CD8-positive, alpha-beta memory T cell (primary cell): ENCODE measurements at regions of chr5 and their contacts with region 1.

Region 1: GRCh38 chr5:135565725-135566421 is 12.9 kb downstream of the CXCL14 start:
- DNase-seq: peak; percentile 14 to 67 (median 42)
- H3K4me3 ChIP-seq: no peak overlapping the region
- H3K4me3 Mint-ChIP-seq: no peak overlapping the region
- H3K27ac ChIP-seq: no peak overlapping the region
- H3K27ac Mint-ChIP-seq: no peak overlapping the region
- H3K4me1 ChIP-seq: peaks cover 7% of the 10 kb centered on the region
- H3K4me1 Mint-ChIP-seq: peaks cover 3 to 14% (median 4%) of the 10 kb centered on the region in 3 donors
- H3K27me3 ChIP-seq: no peaks in the 10 kb centered on the region
- H3K27me3 Mint-ChIP-seq: peaks cover 4 to 17% of the 10 kb centered on the region in 2 donors

Region 2: GRCh38 chr5:135437796-135438560 is 127.9 kb before region 1 on chr5:
- CTCF ChIA-PET with region 1: no interaction called
- POLR2A ChIA-PET with region 1: no interaction called
- DNase-seq: no peak
- H3K4me3 ChIP-seq: no peak overlapping the region
- H3K4me3 Mint-ChIP-seq: no peak overlapping the region
- H3K27ac ChIP-seq: peak overlapping the region; percentile 51
- H3K27ac Mint-ChIP-seq: no peak overlapping the region
- H3K4me1 ChIP-seq: no peaks in the 10 kb centered on the region
- H3K4me1 Mint-ChIP-seq: no peaks in the 10 kb centered on the region
- H3K27me3 ChIP-seq: no peaks in the 10 kb centered on the region
- H3K27me3 Mint-ChIP-seq: peaks cover 4 to 20% of the 10 kb centered on the region in 2 donors

Region 3: DNA sequence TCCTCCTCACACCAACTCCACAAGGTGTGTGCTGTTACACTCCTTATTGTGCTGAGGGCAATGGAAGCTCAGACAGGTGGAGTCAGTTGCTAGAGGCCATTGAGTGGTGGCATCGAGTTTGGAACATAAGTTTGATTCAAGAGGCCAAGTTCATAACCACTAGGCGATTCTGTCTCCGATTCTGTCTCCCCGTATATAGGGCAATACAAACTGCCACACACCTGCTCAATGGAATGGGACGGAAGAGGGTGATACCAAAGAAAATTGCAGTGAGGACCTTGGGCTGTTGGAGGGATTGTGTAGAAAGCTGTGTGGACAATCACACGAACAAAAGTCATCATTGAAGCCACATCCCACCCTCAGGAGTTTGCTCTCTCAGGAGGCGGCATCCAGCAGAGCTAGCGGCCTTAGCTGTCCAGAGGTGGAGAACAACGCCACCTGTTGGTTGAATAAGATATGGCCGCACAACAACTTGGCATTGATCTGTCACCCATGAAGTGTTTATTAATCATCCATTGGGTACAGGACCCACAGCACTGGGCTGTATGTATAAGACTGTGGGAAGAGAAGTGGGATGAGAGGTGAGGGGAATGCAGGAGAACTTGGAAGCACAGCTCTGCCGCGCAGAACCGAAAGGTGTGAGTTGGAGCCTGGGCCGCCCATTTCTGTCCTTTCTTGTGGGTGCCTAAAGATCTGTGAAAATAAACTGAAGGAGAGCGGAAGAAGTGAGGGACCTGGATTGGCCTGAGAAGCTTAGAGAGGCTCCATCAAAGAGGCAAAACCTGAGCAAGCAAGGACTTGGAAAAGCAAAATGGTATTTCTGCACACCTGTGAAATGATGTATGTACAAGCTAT is 14.1 kb before region 1 on chr5:
- CTCF ChIA-PET with region 1: interaction called, 47 read pairs
- POLR2A ChIA-PET with region 1: no interaction called
- DNase-seq: peak; percentile 16 to 55 (median 19)
- H3K4me3 ChIP-seq: no peak overlapping the region
- H3K4me3 Mint-ChIP-seq: no peak overlapping the region
- H3K27ac ChIP-seq: no peak overlapping the region
- H3K27ac Mint-ChIP-seq: no peak overlapping the region
- H3K4me1 ChIP-seq: no peaks in the 10 kb centered on the region
- H3K4me1 Mint-ChIP-seq: peaks cover 0 to 2% (median 0%) of the 10 kb centered on the region in 3 donors
- H3K27me3 ChIP-seq: no peaks in the 10 kb centered on the region
- H3K27me3 Mint-ChIP-seq: peaks cover 33 to 78% of the 10 kb centered on the region in 2 donors

Region 4: GRCh38 chr5:135598691-135599395 is 33.0 kb after region 1 on chr5:
- CTCF ChIA-PET with region 1: no interaction called
- POLR2A ChIA-PET with region 1: no interaction called
- DNase-seq: no peak
- H3K4me3 ChIP-seq: no peak overlapping the region
- H3K4me3 Mint-ChIP-seq: no peak overlapping the region
- H3K27ac ChIP-seq: no peak overlapping the region
- H3K27ac Mint-ChIP-seq: no peak overlapping the region
- H3K4me1 ChIP-seq: no peaks in the 10 kb centered on the region
- H3K4me1 Mint-ChIP-seq: no peaks in the 10 kb centered on the region
- H3K27me3 ChIP-seq: no peaks in the 10 kb centered on the region
- H3K27me3 Mint-ChIP-seq: peaks cover 5 to 12% of the 10 kb centered on the region in 2 donors